HepG2 (cell line): ENCODE measurements at regions of chr9 and their contacts with region 1.

Region 1: GRCh38 chr9:92438900-92439526 is 14.7 kb upstream of the OMD start:
- DNase-seq: no peak
- ATAC-seq: no peak
- H3K4me3 ChIP-seq: no peak overlapping the region
- H3K27ac ChIP-seq: no peak overlapping the region
- H3K4me1 ChIP-seq: no peaks in the 10 kb centered on the region
- H3K27me3 ChIP-seq: no peaks in the 10 kb centered on the region
- CTCF ChIP-seq: no peak
- EP300 ChIP-seq: no peak
- POLR2A ChIP-seq: no peak
- RAD21 ChIP-seq: no peak

Region 2: GRCh38 chr9:92133949-92134604 is 304.9 kb before region 1 on chr9:
- CTCF ChIA-PET with region 1: interaction called, 7 read pairs
- POLR2A ChIA-PET with region 1: interaction called, 3 read pairs
- in situ Hi-C with region 1: loop called (anchors 25 kb)
- intact Hi-C with region 1: loop called (anchors 5 kb)
- DNase-seq: peak; percentile 75
- ATAC-seq: peak; percentile 60
- H3K4me3 ChIP-seq: peak overlapping the region in 2 of 3 experiments; percentile 24 to 64; a peak in 5 of 6 replicates
- H3K27ac ChIP-seq: no peak overlapping the region
- H3K4me1 ChIP-seq: peaks cover 22% of the 10 kb centered on the region
- H3K27me3 ChIP-seq: peaks cover 1 to 3% of the 10 kb centered on the region in 2 experiments; a peak in 1 of 5 replicates
- CTCF ChIP-seq: peak; percentile 98
- EP300 ChIP-seq: no peak
- POLR2A ChIP-seq: no peak
- RAD21 ChIP-seq: peak; percentile 84

Region 3: GRCh38 chr9:92242260-92243136 is 196.5 kb before region 1 on chr9:
- CTCF ChIA-PET with region 1: no interaction called
- POLR2A ChIA-PET with region 1: no interaction called
- in situ Hi-C with region 1: loop called (anchors 10 kb)
- intact Hi-C with region 1: no loop called
- DNase-seq: no peak
- ATAC-seq: peak; percentile 59
- H3K4me3 ChIP-seq: no peak overlapping the region
- H3K27ac ChIP-seq: no peak overlapping the region
- H3K4me1 ChIP-seq: peaks cover 5% of the 10 kb centered on the region
- H3K27me3 ChIP-seq: no peaks in the 10 kb centered on the region
- CTCF ChIP-seq: no peak
- EP300 ChIP-seq: no peak
- POLR2A ChIP-seq: no peak
- RAD21 ChIP-seq: no peak

Region 4: GRCh38 chr9:92312887-92313623 is 126.0 kb before region 1 on chr9:
- CTCF ChIA-PET with region 1: no interaction called
- POLR2A ChIA-PET with region 1: no interaction called
- in situ Hi-C with region 1: no loop called
- intact Hi-C with region 1: no loop called
- DNase-seq: no peak
- ATAC-seq: no peak
- H3K4me3 ChIP-seq: no peak overlapping the region
- H3K27ac ChIP-seq: no peak overlapping the region
- H3K4me1 ChIP-seq: no peaks in the 10 kb centered on the region; the same call in 1 of the 2 replicates
- H3K27me3 ChIP-seq: no peaks in the 10 kb centered on the region
- CTCF ChIP-seq: no peak
- EP300 ChIP-seq: no peak
- POLR2A ChIP-seq: no peak
- RAD21 ChIP-seq: no peak

Region 5: DNA sequence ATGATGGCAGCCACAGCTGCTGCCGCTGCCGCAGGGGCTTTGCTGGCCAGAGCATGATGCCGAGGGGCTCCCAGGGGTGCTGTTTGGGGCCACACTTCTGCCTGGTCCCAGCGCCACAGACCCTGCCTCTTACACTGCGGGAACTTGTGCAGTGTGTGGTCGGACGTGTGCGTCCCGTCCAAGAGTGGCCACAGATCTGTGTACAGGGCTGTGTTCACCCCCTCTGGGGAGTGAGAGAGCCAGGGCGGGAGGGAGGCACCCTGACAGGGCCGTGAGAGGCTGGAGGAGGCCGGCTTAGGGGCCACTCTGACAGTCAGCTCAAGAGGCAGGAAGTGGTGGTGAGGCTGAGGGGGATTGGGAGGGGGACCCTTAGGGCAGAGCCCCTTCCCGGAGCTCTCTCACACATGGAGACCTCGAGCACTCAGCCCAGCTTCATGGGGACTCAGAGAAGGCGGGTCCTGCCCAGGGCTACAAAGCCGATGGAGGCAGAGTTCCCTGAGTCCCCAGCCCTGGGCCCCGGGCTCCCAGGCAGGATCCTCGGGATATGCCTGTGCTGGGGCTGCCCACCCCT is 643.9 kb after region 1 on chr9:
- CTCF ChIA-PET with region 1: no interaction called
- POLR2A ChIA-PET with region 1: no interaction called
- in situ Hi-C with region 1: no loop called
- intact Hi-C with region 1: no loop called
- DNase-seq: no peak
- ATAC-seq: no peak; the same call in 2 of the 3 replicates
- H3K4me3 ChIP-seq: no peak overlapping the region
- H3K27ac ChIP-seq: no peak overlapping the region
- H3K4me1 ChIP-seq: peaks cover 8% of the 10 kb centered on the region
- H3K27me3 ChIP-seq: no peaks in the 10 kb centered on the region; a peak in 1 of 5 replicates
- CTCF ChIP-seq: no peak
- EP300 ChIP-seq: no peak
- POLR2A ChIP-seq: no peak
- RAD21 ChIP-seq: no peak